ENCODE measurements at regions of chr4 and their contacts with region 1.

Region 1: GRCh38 chr4:171342646-171343045 is 470.6 kb upstream of the GALNTL6 start:
- DNase-seq: no peak
- H3K4me3 ChIP-seq: no peak overlapping the region
- H3K27ac ChIP-seq: no peak overlapping the region
- H3K4me1 ChIP-seq: no peaks in the 10 kb centered on the region
- H3K27me3 ChIP-seq: no peaks in the 10 kb centered on the region
- CTCF ChIP-seq: no peak
- POLR2A ChIP-seq: no peak

Region 2: DNA sequence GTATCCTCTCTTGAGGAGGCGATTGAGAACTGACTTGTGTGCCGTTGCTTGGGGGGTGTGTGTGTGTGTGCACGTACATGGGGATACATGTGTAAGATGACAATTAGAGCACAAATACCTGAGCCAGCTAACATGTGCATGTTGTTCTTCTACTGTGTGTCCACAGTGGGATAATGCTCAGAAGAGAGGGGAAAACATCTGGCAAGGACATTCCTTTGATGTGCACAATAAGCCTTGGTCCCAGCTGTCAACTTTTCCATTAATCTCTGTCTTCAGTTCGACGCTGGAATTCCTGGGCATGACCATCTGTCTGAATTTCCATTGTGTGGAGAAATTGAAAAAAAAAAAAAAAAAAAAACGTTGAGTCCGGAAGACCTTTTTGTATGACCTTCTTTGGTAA is 121.5 kb before region 1 on chr4:
- intact Hi-C with region 1: loop called (anchors 5 kb)
- DNase-seq: no peak
- H3K4me3 ChIP-seq: no peak overlapping the region
- H3K27ac ChIP-seq: no peak overlapping the region
- H3K4me1 ChIP-seq: no peaks in the 10 kb centered on the region
- H3K27me3 ChIP-seq: no peaks in the 10 kb centered on the region
- CTCF ChIP-seq: no peak
- POLR2A ChIP-seq: no peak

Region 3: DNA sequence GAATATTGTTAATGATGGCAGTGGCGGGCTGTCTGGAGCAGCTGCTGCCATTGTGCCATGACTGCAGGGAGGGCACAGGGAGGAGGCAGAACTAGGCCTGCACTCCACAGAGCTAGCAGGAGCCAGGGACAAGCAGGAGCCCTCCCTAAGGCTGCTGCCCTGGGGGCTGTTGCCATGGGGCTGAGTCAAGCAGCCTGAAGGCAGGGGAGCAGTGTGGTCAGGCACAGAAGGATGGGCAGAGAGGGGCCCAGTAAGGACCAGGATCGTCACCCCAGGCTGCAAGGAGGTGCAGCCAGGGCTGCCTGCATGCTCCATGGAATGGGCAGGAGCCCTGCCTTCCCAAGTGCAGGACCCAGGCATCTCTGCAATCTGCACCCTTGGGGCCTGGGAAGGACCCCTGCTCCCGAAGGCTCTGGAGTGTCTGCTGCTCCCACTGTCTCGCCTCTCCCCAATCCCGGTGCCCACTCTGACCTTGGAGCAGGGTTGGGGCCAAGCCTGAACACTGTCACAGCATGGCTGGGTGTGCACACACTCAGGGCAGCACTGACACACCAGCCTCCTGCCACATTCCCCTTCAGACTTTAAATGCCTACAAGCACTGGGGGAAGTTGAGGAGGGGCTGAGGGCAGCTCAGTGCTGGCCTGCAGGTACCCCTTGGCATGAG is 372.3 kb after region 1 on chr4:
- intact Hi-C with region 1: no loop called
- DNase-seq: no peak
- H3K4me3 ChIP-seq: no peak overlapping the region
- H3K27ac ChIP-seq: no peak overlapping the region
- H3K4me1 ChIP-seq: no peaks in the 10 kb centered on the region
- H3K27me3 ChIP-seq: no peaks in the 10 kb centered on the region
- CTCF ChIP-seq: no peak
- POLR2A ChIP-seq: no peak

Region 4: GRCh38 chr4:172628263-172628662 is 1285.6 kb after region 1 on chr4:
- intact Hi-C with region 1: no loop called
- DNase-seq: no peak
- H3K4me3 ChIP-seq: no peak overlapping the region
- H3K27ac ChIP-seq: no peak overlapping the region
- H3K4me1 ChIP-seq: no peaks in the 10 kb centered on the region
- H3K27me3 ChIP-seq: no peaks in the 10 kb centered on the region
- CTCF ChIP-seq: no peak
- POLR2A ChIP-seq: no peak